ENCODE measurements at regions of chrX and their contacts with region 1.

Region 1: DNA sequence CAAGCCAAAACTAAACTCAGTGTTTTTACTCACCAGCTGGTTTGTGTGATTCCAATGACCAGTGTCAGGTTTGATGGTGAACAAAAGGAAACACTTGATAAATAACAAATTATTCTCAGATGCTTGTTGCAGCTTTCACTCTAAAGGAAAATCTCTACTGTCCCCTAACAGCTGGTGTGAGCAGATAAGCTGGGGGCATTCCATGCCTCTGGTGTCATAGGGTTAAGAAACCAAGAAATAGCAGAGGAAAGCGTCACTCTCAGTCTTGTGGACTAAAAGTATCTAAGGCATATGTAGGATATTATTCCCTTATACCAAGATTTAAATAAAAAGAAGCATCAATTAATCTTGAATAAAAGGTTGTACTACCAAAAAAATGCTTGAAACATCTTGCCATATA is 24.3 kb downstream of the TRPC5 start:
- DNase-seq: no peak
- ATAC-seq: no peak
- H3K4me3 ChIP-seq: no peak overlapping the region
- H3K27ac ChIP-seq: no peak overlapping the region
- H3K4me1 ChIP-seq: no peaks in the 10 kb centered on the region
- H3K27me3 ChIP-seq: no peaks in the 10 kb centered on the region

Region 2: DNA sequence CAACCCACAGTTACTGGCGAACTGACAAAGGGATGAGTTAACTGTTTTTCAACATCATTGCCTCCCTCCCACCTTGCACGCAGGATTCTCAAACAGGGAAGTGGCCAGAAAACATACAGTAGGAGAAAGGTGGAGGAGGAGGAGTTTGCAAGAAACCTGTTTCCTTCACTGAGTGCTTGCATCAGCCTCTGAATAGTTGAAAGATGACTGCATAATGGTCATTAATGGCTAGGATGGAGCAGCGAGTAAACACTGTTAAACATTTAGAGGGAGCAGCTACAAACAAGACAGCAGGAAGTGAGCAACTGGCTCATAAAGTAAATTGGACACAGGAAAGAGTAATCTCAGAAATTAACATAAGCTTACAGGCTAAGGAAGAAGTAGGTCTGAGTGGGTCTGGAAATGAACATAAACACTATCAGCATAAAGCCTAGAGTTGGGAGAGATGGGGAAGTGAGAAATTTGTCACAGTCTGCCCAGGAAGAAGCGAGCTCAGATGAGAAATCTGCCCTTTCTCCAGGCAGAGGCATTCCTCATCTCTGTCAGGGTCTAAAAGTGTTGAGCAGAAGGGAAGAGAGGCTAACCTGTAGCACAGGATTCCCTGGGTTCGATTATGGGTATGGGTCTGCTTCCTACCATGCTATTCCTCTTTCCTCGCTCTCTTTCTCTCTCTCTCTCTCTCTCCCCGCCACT is 143.7 kb before region 1 on chrX:
- intact Hi-C with region 1: loop called in 1 of 2 experiments (anchors 10 kb)
- DNase-seq: no peak
- ATAC-seq: no peak
- H3K4me3 ChIP-seq: no peak overlapping the region
- H3K27ac ChIP-seq: no peak overlapping the region
- H3K4me1 ChIP-seq: no peaks in the 10 kb centered on the region
- H3K27me3 ChIP-seq: no peaks in the 10 kb centered on the region

Measured in aorta (tissue), 5 donors.